OCI-LY7 (cell line): ENCODE measurements at regions of chr16 and their contacts with region 1.

Region 1: GRCh38 chr16:68257906-68258800 is 6.2 kb upstream of the SLC7A6 start:
- DNase-seq: no peak
- H3K4me3 ChIP-seq: peak overlapping the region; percentile 27
- H3K27ac ChIP-seq: peak overlapping the region; percentile 94
- H3K4me1 ChIP-seq: peaks cover 61% of the 10 kb centered on the region
- CTCF ChIP-seq: no peak

Region 2: GRCh38 chr16:68090130-68090529 is 168.0 kb before region 1 on chr16:
- CTCF ChIA-PET with region 1: no interaction called
- POLR2A ChIA-PET with region 1: no interaction called
- intact Hi-C with region 1: no loop called
- DNase-seq: peak; percentile 60
- H3K4me3 ChIP-seq: peak overlapping the region; percentile 60
- H3K27ac ChIP-seq: peak overlapping the region; percentile 59
- H3K4me1 ChIP-seq: peaks cover 68% of the 10 kb centered on the region
- CTCF ChIP-seq: no peak

Region 3: GRCh38 chr16:68244903-68245853 is 13.0 kb before region 1 on chr16 and contains the start of gene PLA2G15:
- CTCF ChIA-PET with region 1: interaction called, 7 read pairs
- POLR2A ChIA-PET with region 1: interaction called, 13 read pairs
- intact Hi-C with region 1: loop called (anchors 1 kb)
- DNase-seq: peak; percentile 94
- H3K4me3 ChIP-seq: peak within 1 kb of the TSS; percentile 80
- H3K27ac ChIP-seq: peak within 1 kb of the TSS; percentile 2
- H3K4me1 ChIP-seq: peaks cover 34% of the 10 kb centered on the region
- CTCF ChIP-seq: no peak
- total RNA-seq, gene PLA2G15: 38.9 and 46.2 TPM in 2 replicates

Region 4: GRCh38 chr16:68328151-68328859 is 70.2 kb after region 1 on chr16:
- CTCF ChIA-PET with region 1: interaction called, 17 read pairs
- POLR2A ChIA-PET with region 1: interaction called, 7 read pairs
- intact Hi-C with region 1: loop called (anchors 1 kb)
- DNase-seq: peak; percentile 91
- H3K4me3 ChIP-seq: no peak overlapping the region
- H3K27ac ChIP-seq: no peak overlapping the region
- H3K4me1 ChIP-seq: peaks cover 28% of the 10 kb centered on the region
- CTCF ChIP-seq: peak; percentile 96

Region 5: DNA sequence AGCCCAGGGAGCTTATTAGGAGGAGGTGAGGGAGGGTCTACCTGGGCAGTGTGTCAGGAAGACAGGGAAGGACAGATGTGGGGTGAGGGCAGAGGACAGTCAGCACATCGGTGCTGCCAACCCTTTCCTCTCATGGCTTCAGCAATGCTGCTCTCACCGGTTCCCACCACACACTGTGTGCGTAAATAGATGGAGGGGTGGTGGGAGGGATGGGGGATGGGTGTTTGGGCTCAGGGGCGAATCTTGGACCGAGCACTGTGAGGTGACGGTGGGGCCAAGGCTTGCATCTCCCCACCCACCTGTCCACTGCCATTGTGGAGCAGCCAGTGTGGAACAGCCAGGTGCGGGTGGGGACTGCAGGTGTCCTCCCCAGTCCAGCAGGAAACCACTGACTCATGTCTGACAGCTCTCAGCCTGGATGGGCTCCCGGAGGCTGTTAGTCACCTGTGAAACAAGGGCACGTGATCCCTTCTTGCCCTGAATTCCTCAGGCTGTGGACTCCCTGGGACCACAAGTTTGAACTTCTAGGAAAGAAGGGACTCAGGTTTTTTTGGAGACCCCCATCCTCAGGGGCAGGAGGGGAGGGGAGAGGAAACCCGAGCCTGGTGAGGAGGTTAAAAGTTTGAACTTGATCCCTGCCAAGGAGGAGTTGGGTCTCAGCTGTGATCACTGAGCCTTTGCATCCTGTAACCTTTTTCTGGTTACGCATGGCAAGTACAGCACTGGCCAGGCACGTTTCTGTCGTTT is 232.8 kb after region 1 on chr16:
- CTCF ChIA-PET with region 1: no interaction called
- POLR2A ChIA-PET with region 1: no interaction called
- intact Hi-C with region 1: loop called (anchors 10 kb)
- DNase-seq: peak; percentile 85
- H3K4me3 ChIP-seq: peak overlapping the region; percentile 61
- H3K27ac ChIP-seq: peak overlapping the region; percentile 79
- H3K4me1 ChIP-seq: peaks cover 75% of the 10 kb centered on the region
- CTCF ChIP-seq: no peak